ENCODE measurements at regions of chr6 and their contacts with region 1.

Region 1: DNA sequence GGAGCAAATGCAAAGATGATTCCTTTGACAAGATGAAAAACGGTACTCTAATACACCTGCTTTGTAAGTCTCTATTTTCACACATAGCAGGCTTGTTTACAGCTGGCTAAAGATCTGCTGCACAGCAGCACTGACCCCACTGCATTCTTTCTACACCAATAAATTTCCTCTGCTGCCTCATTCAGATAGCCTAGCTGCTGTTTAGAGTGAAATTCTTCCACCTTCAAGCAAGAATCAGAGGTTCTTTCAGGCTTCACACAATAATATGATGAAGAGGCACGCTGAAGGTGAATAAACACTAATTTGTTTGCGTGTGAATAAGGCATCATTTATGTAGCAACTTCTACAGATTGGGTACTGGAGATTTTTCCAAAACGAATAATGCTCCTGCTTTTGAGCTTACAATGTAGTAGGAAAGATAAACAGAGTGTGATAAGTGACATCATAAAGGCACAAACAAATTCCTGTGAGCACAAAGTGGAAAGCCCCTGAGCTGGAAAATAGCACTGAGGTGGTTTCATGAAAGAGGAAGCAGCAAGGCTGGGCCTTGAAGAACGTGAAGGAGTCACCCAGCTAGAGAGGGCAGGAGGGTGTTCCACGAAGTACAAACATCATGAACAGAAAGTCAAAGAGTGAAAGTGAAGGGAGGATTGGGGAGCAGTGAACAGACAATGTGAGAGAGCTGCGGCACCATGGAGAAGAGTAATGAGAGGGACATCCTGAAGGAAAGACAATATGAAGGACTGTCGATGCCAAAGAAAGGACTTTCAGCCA is 543.4 kb downstream of the CD83 start:
- DNase-seq: peak; percentile 52
- H3K4me3 Mint-ChIP-seq: no peak overlapping the region
- H3K27ac Mint-ChIP-seq: no peak overlapping the region
- H3K4me1 Mint-ChIP-seq: peaks cover 35% of the 10 kb centered on the region
- H3K27me3 Mint-ChIP-seq: no peaks in the 10 kb centered on the region

Region 2: DNA sequence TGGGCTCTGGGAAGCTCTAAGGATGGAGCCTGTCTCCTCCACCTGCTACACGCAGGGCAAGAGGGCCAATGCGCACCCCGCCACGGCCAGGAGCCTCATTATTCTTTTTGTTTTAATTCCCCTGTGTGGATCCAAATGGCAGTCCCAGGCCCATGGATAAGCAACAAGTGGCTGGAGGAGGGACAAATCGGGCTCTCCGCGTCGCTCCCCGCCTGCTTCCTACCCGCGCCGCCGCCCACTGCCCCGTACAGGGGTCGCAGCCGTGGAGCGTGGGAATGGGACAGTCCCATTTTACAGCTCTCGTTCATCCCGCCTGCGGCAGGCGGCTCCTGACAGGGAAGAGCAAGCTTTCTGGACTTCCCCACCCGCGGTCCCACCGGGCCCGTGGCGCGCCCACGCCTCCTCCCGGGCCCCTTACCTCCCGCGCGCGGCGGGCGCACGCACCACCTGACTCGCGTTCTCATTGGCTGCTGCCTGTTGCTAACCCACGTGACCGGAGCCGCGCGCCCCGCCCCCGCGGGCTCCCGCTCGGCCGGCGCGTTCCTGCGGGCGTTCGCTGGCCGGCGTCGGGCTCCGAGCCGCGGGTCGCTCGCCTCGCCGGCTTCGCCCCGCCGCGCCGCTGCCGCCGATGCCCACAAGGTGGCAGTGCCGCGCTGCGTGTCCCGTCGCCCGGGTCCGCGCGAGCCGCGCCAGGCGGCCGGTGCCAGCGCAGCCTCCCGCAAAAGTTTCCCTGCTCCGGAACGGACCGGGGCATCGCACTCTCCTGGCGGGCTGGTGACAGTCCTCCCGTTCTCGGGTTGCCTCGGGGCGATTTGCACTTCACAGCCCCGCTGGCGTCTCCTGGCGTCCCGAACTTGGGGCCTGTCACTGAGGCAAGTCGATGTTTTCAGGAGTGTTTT is 450.1 kb before region 1 on chr6:
- intact Hi-C with region 1: loop called (anchors 5 kb)
- DNase-seq: peak; percentile 92
- H3K4me3 Mint-ChIP-seq: peak overlapping the region; percentile 78
- H3K27ac Mint-ChIP-seq: peak overlapping the region; percentile 83
- H3K4me1 Mint-ChIP-seq: peaks cover 40% of the 10 kb centered on the region
- H3K27me3 Mint-ChIP-seq: no peaks in the 10 kb centered on the region

Region 3: GRCh38 chr6:14542670-14543366 is 118.2 kb before region 1 on chr6:
- intact Hi-C with region 1: loop called (anchors 2 kb)
- DNase-seq: peak; percentile 23
- H3K4me3 Mint-ChIP-seq: no peak overlapping the region
- H3K27ac Mint-ChIP-seq: peak overlapping the region; percentile 76
- H3K4me1 Mint-ChIP-seq: peaks cover 31% of the 10 kb centered on the region
- H3K27me3 Mint-ChIP-seq: no peaks in the 10 kb centered on the region

Region 4: GRCh38 chr6:14638906-14639761 is 21.9 kb before region 1 on chr6:
- intact Hi-C with region 1: loop called (anchors 2 kb)
- DNase-seq: no peak
- H3K4me3 Mint-ChIP-seq: no peak overlapping the region
- H3K27ac Mint-ChIP-seq: no peak overlapping the region
- H3K4me1 Mint-ChIP-seq: peaks cover 74% of the 10 kb centered on the region
- H3K27me3 Mint-ChIP-seq: peaks cover 3% of the 10 kb centered on the region

Region 5: GRCh38 chr6:14711056-14711703 is 50.2 kb after region 1 on chr6:
- intact Hi-C with region 1: loop called (anchors 1 kb)
- DNase-seq: peak; percentile 63
- H3K4me3 Mint-ChIP-seq: peak overlapping the region; percentile 75
- H3K27ac Mint-ChIP-seq: peak overlapping the region; percentile 99
- H3K4me1 Mint-ChIP-seq: peaks cover 60% of the 10 kb centered on the region
- H3K27me3 Mint-ChIP-seq: no peaks in the 10 kb centered on the region

Region 6: GRCh38 chr6:14857501-14857900 is 196.5 kb after region 1 on chr6:
- intact Hi-C with region 1: loop called (anchors 5 kb)
- DNase-seq: peak; percentile 18
- H3K4me3 Mint-ChIP-seq: peak overlapping the region; percentile 19
- H3K27ac Mint-ChIP-seq: peak overlapping the region; percentile 92
- H3K4me1 Mint-ChIP-seq: peaks cover 46% of the 10 kb centered on the region
- H3K27me3 Mint-ChIP-seq: no peaks in the 10 kb centered on the region

Measured in activated T-helper 2 cell treated with anti-CD3 and anti-CD28 coated beads, Interferon-gamma antibody, Interleukin-2, Interleukin-4, amounts not matched to agents 10 μg/mL and 5 μg/mL and 100 μg/mL, durations not matched to agents 14 hours and 24 hours and 36 hours (primary cell).